A673 (cell line): ENCODE measurements at regions of chr9 and their contacts with region 1.

Region 1: DNA sequence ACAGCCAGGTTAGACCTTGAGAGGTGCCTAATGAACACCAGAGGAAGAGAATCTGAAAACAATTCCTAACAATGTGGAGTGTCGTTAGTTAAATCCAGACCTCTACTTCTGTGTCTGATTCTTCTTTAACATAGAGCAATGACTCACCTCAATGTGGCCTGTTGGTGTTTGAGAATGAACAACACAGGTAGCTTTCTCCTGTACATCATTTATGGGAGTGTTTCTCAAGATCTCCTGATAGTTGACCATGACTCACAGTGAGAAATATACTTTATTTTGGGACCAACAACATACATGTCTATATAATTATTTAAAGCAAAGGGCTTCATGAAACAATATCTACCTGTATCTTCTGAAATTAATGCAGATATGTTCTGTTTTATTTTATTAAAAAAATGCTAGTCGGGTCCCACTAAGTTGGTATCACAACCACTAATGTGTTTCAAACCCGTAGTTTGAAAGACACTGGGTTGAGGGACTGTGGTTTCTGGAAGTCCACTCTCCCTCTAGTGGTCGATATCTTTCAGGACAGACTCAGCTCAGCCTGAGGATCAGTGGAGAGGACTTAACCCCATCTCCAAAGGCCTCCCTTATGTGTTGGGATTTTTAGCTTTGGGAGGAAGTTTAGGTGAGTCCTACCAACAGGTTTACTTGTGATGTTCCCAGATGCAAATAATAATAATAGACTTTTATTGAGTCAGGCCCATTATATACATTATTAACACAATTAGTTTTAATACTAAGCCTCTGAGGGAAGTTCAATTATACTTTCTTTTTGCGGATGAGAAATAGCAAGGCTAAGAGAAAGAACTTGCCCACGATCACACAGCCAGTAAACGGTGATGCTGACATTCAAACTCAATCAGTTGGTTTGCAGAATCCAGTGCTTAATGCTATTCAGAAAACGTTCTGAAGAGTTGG is 70.0 kb upstream of the KLF9 start:
- DNase-seq: peak; percentile 58
- H3K4me3 ChIP-seq: no peak overlapping the region
- H3K27ac ChIP-seq: no peak overlapping the region
- H3K4me1 ChIP-seq: no peaks in the 10 kb centered on the region
- H3K27me3 ChIP-seq: no peaks in the 10 kb centered on the region
- CTCF ChIP-seq: peak; percentile 79

Region 2: DNA sequence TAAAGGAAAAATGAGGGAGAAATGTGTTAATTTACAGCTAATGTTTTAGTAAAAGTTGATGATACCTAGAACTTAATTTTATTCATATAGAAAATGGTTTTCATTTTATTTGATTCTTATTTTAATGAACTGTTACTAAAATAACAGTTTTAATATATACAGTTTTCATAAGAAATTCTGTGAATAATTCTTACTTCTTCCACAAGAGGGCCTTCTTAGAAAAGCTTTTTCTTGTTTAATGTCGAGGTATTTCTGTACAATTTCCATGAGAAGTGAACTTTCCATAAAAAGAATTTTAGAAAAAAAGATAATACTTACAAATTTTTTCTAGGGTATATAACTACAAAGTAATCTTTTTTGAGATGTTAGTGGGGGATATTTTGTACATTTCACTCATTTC is 143.9 kb before region 1 on chr9:
- CTCF ChIA-PET with region 1: interaction called, 3 read pairs
- POLR2A ChIA-PET with region 1: no interaction called
- intact Hi-C with region 1: loop called (anchors 5 kb)
- DNase-seq: peak; percentile 37
- H3K4me3 ChIP-seq: no peak overlapping the region
- H3K27ac ChIP-seq: no peak overlapping the region
- H3K4me1 ChIP-seq: no peaks in the 10 kb centered on the region
- H3K27me3 ChIP-seq: no peaks in the 10 kb centered on the region
- CTCF ChIP-seq: peak; percentile 59; the same call in 1 of the 2 replicates